ENCODE measurements at regions of chr4 and their contacts with region 1.

Region 1: GRCh38 chr4:104451573-104451972 is 43.1 kb downstream of the CXXC4 start:
- DNase-seq: peak; percentile 9
- H3K4me3 ChIP-seq: no peak overlapping the region
- H3K27ac ChIP-seq: no peak overlapping the region
- H3K4me1 ChIP-seq: no peaks in the 10 kb centered on the region
- H3K27me3 ChIP-seq: no peaks in the 10 kb centered on the region
- CTCF ChIP-seq: peak; percentile 41 to 70

Region 2: GRCh38 chr4:103996637-103997036 is 454.9 kb before region 1 on chr4:
- CTCF ChIA-PET with region 1: no interaction called
- dilution Hi-C with region 1: no loop called
- in situ Hi-C with region 1: no loop called
- intact Hi-C with region 1: loop called (anchors 5 kb)
- DNase-seq: peak; percentile 94
- H3K4me3 ChIP-seq: peak overlapping the region; percentile 19 to 54 (median 24)
- H3K27ac ChIP-seq: peak overlapping the region; percentile 86
- H3K4me1 ChIP-seq: no peaks in the 10 kb centered on the region
- H3K27me3 ChIP-seq: no peaks in the 10 kb centered on the region
- CTCF ChIP-seq: no peak

Region 3: GRCh38 chr4:104015680-104016253 is 435.8 kb before region 1 on chr4:
- CTCF ChIA-PET with region 1: no interaction called
- dilution Hi-C with region 1: no loop called
- in situ Hi-C with region 1: no loop called
- intact Hi-C with region 1: loop called (anchors 2 kb)
- DNase-seq: no peak
- H3K4me3 ChIP-seq: no peak overlapping the region
- H3K27ac ChIP-seq: no peak overlapping the region
- H3K4me1 ChIP-seq: no peaks in the 10 kb centered on the region
- H3K27me3 ChIP-seq: no peaks in the 10 kb centered on the region
- CTCF ChIP-seq: peak; percentile 26 to 51

Region 4: GRCh38 chr4:104064646-104065577 is 386.7 kb before region 1 on chr4:
- CTCF ChIA-PET with region 1: no interaction called
- dilution Hi-C with region 1: no loop called
- in situ Hi-C with region 1: no loop called
- intact Hi-C with region 1: loop called (anchors 2 kb)
- DNase-seq: peak; percentile 20
- H3K4me3 ChIP-seq: no peak overlapping the region
- H3K27ac ChIP-seq: no peak overlapping the region
- H3K4me1 ChIP-seq: no peaks in the 10 kb centered on the region
- H3K27me3 ChIP-seq: no peaks in the 10 kb centered on the region
- CTCF ChIP-seq: peak; percentile 43 to 53

Measured in mammary epithelial cell (primary cell).